CD4-positive, alpha-beta memory T cell (primary cell): ENCODE measurements at regions of chr11 and their contacts with region 1.

Region 1: GRCh38 chr11:44911029-44911814 is 39.5 kb downstream of the TP53I11 start:
- DNase-seq: peak; percentile 74 to 81 (median 78)
- H3K4me3 ChIP-seq: no peak overlapping the region
- H3K4me3 Mint-ChIP-seq: peak overlapping the region in 1 of 8 donors; percentile 29
- H3K27ac ChIP-seq: no peak overlapping the region
- H3K27ac Mint-ChIP-seq: peak overlapping the region in 6 of 7 donors; percentile 22 to 85 (median 55)
- H3K4me1 ChIP-seq: peaks cover 7% of the 10 kb centered on the region
- H3K4me1 Mint-ChIP-seq: peaks cover 4 to 11% (median 7%) of the 10 kb centered on the region in 4 donors
- H3K27me3 ChIP-seq: no peaks in the 10 kb centered on the region
- H3K27me3 Mint-ChIP-seq: no peaks in the 10 kb centered on the region

Region 2: DNA sequence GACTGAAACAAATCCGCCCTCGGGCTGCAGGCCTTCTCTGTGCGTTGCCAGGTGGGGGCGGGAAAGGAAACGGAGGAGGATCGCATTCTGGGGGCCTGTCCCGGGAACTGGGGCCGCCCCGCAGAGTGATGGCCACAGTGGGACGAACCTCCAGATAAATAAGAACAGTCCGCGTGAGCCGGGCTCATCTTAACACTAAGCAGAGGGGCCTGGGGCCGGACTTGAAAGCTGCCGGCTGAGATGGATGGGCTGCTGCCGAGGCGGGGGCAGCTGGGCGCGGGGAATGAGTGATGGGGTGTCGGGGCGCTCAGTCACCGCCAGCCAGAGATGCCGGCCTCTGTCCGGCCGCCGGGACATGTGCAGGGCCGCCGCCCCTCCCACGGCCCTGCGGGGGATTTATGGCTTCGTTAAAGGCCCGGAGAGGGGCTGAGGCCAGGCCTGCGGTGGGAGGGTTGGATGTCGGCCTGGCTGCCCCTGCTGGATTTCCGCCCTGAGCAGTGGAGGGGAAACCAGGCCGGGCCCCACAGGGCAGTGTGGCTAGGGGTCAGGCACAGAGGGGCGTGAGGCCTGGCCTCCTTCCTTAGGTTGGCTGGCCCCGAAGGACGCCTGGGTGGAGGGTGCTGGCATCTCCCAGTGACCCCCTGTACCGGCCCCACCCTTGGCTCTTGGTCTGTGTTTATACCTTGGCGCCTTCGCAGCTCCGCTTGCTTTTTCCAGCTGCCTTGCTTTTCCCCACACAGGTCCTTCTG is 391.1 kb before region 1 on chr11:
- CTCF ChIA-PET with region 1: interaction called, 4 read pairs
- POLR2A ChIA-PET with region 1: no interaction called
- intact Hi-C with region 1: loop called (anchors 1 kb)
- DNase-seq: no peak
- H3K4me3 ChIP-seq: no peak overlapping the region
- H3K4me3 Mint-ChIP-seq: no peak overlapping the region
- H3K27ac ChIP-seq: no peak overlapping the region
- H3K27ac Mint-ChIP-seq: no peak overlapping the region
- H3K4me1 ChIP-seq: no peaks in the 10 kb centered on the region
- H3K4me1 Mint-ChIP-seq: peaks cover 0 to 7% (median 1%) of the 10 kb centered on the region in 4 donors
- H3K27me3 ChIP-seq: no peaks in the 10 kb centered on the region
- H3K27me3 Mint-ChIP-seq: peaks cover 9 to 29% of the 10 kb centered on the region in 2 donors

Region 3: GRCh38 chr11:44565211-44565952 is 345.8 kb before region 1 on chr11 and contains the start of gene CD82:
- CTCF ChIA-PET with region 1: interaction called, 42 read pairs
- POLR2A ChIA-PET with region 1: no interaction called
- intact Hi-C with region 1: no loop called
- DNase-seq: peak; percentile 93 to 96 (median 95)
- H3K4me3 ChIP-seq: peak within 1 kb of the TSS; percentile 59 to 97
- H3K4me3 Mint-ChIP-seq: peak within 1 kb of the TSS; percentile 85 to 94 (median 92)
- H3K27ac ChIP-seq: peak within 1 kb of the TSS; percentile 82
- H3K27ac Mint-ChIP-seq: peak within 1 kb of the TSS; percentile 93 to 96 (median 95)
- H3K4me1 ChIP-seq: peaks cover 47% of the 10 kb centered on the region
- H3K4me1 Mint-ChIP-seq: peaks cover 40 to 90% (median 56%) of the 10 kb centered on the region in 4 donors
- H3K27me3 ChIP-seq: no peaks in the 10 kb centered on the region
- H3K27me3 Mint-ChIP-seq: no peaks in the 10 kb centered on the region
- total RNA-seq, gene CD82: 130 to 133 TPM

Region 4: GRCh38 chr11:44621140-44621681 is 290.0 kb before region 1 on chr11:
- CTCF ChIA-PET with region 1: interaction called, 53 read pairs
- POLR2A ChIA-PET with region 1: no interaction called
- intact Hi-C with region 1: loop called (anchors 1 kb)
- DNase-seq: peak; percentile 55 to 64 (median 57)
- H3K4me3 ChIP-seq: no peak overlapping the region
- H3K4me3 Mint-ChIP-seq: peak overlapping the region in 1 of 8 donors; percentile 25
- H3K27ac ChIP-seq: no peak overlapping the region
- H3K27ac Mint-ChIP-seq: peak overlapping the region in 5 of 7 donors; percentile 25 to 52 (median 41)
- H3K4me1 ChIP-seq: peaks cover 28% of the 10 kb centered on the region
- H3K4me1 Mint-ChIP-seq: peaks cover 18 to 62% (median 42%) of the 10 kb centered on the region in 4 donors
- H3K27me3 ChIP-seq: no peaks in the 10 kb centered on the region
- H3K27me3 Mint-ChIP-seq: no peaks in the 10 kb centered on the region

Region 5: GRCh38 chr11:44727373-44728287 is 183.6 kb before region 1 on chr11:
- CTCF ChIA-PET with region 1: interaction called, 5 read pairs
- POLR2A ChIA-PET with region 1: no interaction called
- intact Hi-C with region 1: loop called (anchors 1 kb)
- DNase-seq: peak; percentile 77 to 82 (median 79)
- H3K4me3 ChIP-seq: peak overlapping the region; percentile 17 to 74
- H3K4me3 Mint-ChIP-seq: peak overlapping the region; percentile 86 to 94 (median 92)
- H3K27ac ChIP-seq: peak overlapping the region; percentile 66
- H3K27ac Mint-ChIP-seq: peak overlapping the region; percentile 86 to 94 (median 93)
- H3K4me1 ChIP-seq: peaks cover 57% of the 10 kb centered on the region
- H3K4me1 Mint-ChIP-seq: peaks cover 43 to 64% (median 53%) of the 10 kb centered on the region in 4 donors
- H3K27me3 ChIP-seq: no peaks in the 10 kb centered on the region
- H3K27me3 Mint-ChIP-seq: no peaks in the 10 kb centered on the region

Region 6: DNA sequence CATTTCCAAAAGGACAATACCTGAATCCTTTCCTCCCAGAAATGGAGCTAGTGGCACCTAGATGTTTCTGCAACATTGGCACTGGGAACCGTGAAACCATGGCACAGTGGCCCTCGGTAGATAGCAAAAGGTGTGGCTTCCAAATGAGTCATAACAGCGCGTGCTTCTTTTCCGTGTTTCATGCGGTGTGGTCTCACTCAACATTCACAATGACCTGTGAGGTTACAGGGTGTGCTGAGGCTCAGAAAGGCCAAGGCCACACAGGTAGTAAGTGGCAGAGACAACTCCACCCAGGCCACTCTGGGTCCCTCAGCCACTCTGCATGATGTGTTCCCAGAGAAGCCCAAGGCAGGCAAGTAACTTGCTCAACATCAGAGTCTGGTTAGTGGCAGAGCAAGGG is 27.9 kb before region 1 on chr11:
- CTCF ChIA-PET with region 1: interaction called, 10 read pairs
- POLR2A ChIA-PET with region 1: no interaction called
- intact Hi-C with region 1: no loop called
- DNase-seq: no peak
- H3K4me3 ChIP-seq: no peak overlapping the region
- H3K4me3 Mint-ChIP-seq: no peak overlapping the region
- H3K27ac ChIP-seq: no peak overlapping the region
- H3K27ac Mint-ChIP-seq: peak overlapping the region in 2 of 7 donors; percentile 9 to 52
- H3K4me1 ChIP-seq: no peaks in the 10 kb centered on the region
- H3K4me1 Mint-ChIP-seq: peaks cover 4 to 30% (median 10%) of the 10 kb centered on the region in 4 donors
- H3K27me3 ChIP-seq: no peaks in the 10 kb centered on the region
- H3K27me3 Mint-ChIP-seq: no peaks in the 10 kb centered on the region

Region 7: GRCh38 chr11:44899959-44900358 is 11.3 kb before region 1 on chr11:
- CTCF ChIA-PET with region 1: interaction called, 21 read pairs
- POLR2A ChIA-PET with region 1: no interaction called
- intact Hi-C with region 1: no loop called
- DNase-seq: peak in 4 of 5 donors; percentile 16 to 28 (median 18)
- H3K4me3 ChIP-seq: no peak overlapping the region
- H3K4me3 Mint-ChIP-seq: no peak overlapping the region
- H3K27ac ChIP-seq: no peak overlapping the region
- H3K27ac Mint-ChIP-seq: peak overlapping the region in 5 of 7 donors; percentile 4 to 67 (median 43)
- H3K4me1 ChIP-seq: no peaks in the 10 kb centered on the region
- H3K4me1 Mint-ChIP-seq: peaks cover 0 to 6% (median 2%) of the 10 kb centered on the region in 4 donors
- H3K27me3 ChIP-seq: no peaks in the 10 kb centered on the region
- H3K27me3 Mint-ChIP-seq: no peaks in the 10 kb centered on the region